IMR-90 (cell line): ENCODE measurements at regions of chr2 and their contacts with region 1.

Region 1: DNA sequence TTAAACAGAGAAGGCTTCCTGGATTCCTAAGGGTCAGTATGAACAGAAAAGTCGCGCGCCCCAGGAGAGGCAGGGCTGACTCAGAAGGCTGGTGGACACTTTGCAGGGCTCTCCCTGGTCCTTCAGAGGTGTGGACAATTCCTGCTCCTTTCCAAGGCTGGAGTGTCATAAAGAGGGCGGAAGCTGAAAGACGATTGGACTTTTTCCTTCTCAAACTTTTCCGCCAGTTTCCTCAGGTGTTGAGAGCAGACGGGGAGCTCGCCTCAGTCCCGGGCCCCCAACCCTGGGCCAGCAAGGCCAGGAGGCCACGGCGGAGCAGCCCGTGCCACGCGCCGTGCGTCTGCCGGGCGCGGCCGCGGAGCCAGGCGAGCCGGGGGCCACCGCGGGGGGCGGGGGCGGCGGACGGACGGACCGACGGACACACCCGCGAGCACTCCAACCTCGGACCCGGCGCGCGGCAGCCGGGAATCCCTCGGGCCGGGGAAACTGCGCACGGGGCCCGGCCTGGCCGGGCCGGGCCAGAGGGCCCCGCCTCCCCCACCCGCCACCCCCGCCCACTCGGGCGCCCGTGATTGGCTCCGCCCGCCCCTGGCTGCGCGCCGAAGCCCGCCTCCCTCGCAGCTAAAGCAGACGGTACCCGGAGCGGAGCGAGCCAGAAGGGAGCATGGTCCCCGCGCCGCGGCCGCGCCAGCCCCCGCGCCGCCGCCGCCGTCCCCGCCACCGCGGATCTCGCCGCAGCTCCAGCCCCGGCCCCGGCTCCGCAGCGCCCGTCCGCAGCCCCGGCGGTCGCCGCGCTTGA is at the start of gene KLHL29:
- DNase-seq: peak; percentile 71
- ATAC-seq: peak; percentile 78
- H3K4me3 ChIP-seq: peak within 1 kb of the TSS; percentile 88
- H3K27ac ChIP-seq: peak within 1 kb of the TSS; percentile 64
- H3K4me1 ChIP-seq: peaks cover 2% of the 10 kb centered on the region
- H3K27me3 ChIP-seq: no peaks in the 10 kb centered on the region
- CTCF ChIP-seq: no peak
- POLR2A ChIP-seq: peak; percentile 85
- RAD21 ChIP-seq: no peak
- total RNA-seq, gene KLHL29: 2.0 and 2.5 TPM in 2 replicates

Region 2: GRCh38 chr2:23157812-23158211 is 226.9 kb before region 1 on chr2:
- CTCF ChIA-PET with region 1: no interaction called
- POLR2A ChIA-PET with region 1: no interaction called
- dilution Hi-C with region 1: no loop called
- in situ Hi-C with region 1: no loop called
- intact Hi-C with region 1: no loop called
- DNase-seq: no peak
- ATAC-seq: no peak
- H3K4me3 ChIP-seq: no peak overlapping the region
- H3K27ac ChIP-seq: no peak overlapping the region
- H3K4me1 ChIP-seq: no peaks in the 10 kb centered on the region
- H3K27me3 ChIP-seq: no peaks in the 10 kb centered on the region
- CTCF ChIP-seq: no peak
- POLR2A ChIP-seq: no peak
- RAD21 ChIP-seq: no peak

Region 3: DNA sequence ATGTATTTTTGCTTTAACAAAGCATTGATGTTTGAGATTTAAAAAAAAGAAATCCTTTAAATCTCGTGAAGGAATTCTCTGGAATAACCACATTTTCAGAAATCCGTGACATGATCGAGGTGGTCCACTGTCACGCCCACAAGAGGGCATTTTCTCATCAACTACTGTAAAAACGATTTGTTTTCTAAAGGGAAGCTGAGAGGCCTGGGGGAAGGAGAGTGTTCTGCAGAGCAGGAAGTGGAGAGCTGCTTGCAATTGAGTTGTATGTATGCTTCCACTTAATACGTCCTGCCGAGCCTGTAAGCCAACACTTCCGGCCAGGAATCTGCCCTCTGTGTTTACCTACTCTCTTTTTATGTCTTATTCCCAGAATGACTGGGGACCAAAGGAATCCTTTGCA is 19.7 kb after region 1 on chr2:
- CTCF ChIA-PET with region 1: no interaction called
- POLR2A ChIA-PET with region 1: no interaction called
- dilution Hi-C with region 1: no loop called
- in situ Hi-C with region 1: no loop called
- intact Hi-C with region 1: loop called (anchors 2 kb)
- DNase-seq: peak; percentile 91
- ATAC-seq: peak; percentile 88
- H3K4me3 ChIP-seq: no peak overlapping the region
- H3K27ac ChIP-seq: peak overlapping the region; percentile 70; the same call in 1 of the 2 replicates
- H3K4me1 ChIP-seq: peaks cover 6% of the 10 kb centered on the region
- H3K27me3 ChIP-seq: no peaks in the 10 kb centered on the region
- CTCF ChIP-seq: peak; percentile 42
- POLR2A ChIP-seq: no peak
- RAD21 ChIP-seq: peak; percentile 40; the same call in 1 of the 2 replicates

Region 4: DNA sequence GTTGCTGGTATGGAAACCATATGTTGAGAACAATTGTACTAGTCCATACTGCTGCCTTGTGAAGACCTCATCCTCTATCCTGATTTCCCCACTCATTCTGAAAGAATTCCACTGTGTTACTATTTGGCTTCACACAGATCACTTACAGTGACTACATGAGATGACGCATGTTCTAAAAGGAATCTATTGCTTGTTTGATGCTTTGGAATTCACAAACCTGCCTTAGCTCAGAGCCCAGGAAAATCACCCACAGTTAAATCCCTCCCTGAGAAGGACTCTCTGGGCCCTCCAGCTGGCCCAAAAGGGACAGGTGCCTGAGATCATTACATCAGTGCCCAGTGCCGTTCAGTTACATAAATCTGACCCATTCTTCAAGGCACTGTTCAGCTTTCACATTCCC is 45.5 kb after region 1 on chr2:
- CTCF ChIA-PET with region 1: no interaction called
- POLR2A ChIA-PET with region 1: no interaction called
- dilution Hi-C with region 1: no loop called
- in situ Hi-C with region 1: no loop called
- intact Hi-C with region 1: loop called (anchors 2 kb)
- DNase-seq: peak; percentile 99
- ATAC-seq: peak; percentile 79
- H3K4me3 ChIP-seq: no peak overlapping the region
- H3K27ac ChIP-seq: peak overlapping the region; percentile 73
- H3K4me1 ChIP-seq: peaks cover 40% of the 10 kb centered on the region
- H3K27me3 ChIP-seq: no peaks in the 10 kb centered on the region
- CTCF ChIP-seq: no peak
- POLR2A ChIP-seq: no peak
- RAD21 ChIP-seq: peak; percentile 22

Region 5: DNA sequence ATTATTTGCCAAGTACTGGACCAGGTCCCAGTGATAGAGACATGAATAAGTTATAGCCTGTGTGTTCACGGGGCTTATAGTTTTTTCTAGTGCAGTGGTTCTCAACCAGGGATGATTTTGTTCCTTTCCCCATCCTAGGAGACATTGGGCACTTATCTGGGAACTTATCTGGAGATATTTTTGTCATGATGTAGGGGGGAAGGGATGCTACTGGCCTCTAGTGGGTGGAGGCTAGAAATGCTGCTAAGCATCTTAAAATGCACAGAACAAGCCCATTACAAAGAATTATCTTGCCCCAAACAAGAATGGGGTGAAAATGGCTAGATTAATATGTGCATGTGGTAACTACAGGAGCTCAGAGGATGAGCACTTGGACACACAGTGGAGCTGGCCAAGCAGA is 75.5 kb after region 1 on chr2:
- CTCF ChIA-PET with region 1: no interaction called
- POLR2A ChIA-PET with region 1: no interaction called
- dilution Hi-C with region 1: no loop called
- in situ Hi-C with region 1: no loop called
- intact Hi-C with region 1: loop called (anchors 5 kb)
- DNase-seq: peak; percentile 47
- ATAC-seq: peak; percentile 63; the same call in 1 of the 2 replicates
- H3K4me3 ChIP-seq: no peak overlapping the region
- H3K27ac ChIP-seq: no peak overlapping the region
- H3K4me1 ChIP-seq: peaks cover 11% of the 10 kb centered on the region
- H3K27me3 ChIP-seq: no peaks in the 10 kb centered on the region
- CTCF ChIP-seq: peak; percentile 64
- POLR2A ChIP-seq: no peak
- RAD21 ChIP-seq: peak; percentile 75

Region 6: GRCh38 chr2:23545396-23545795 is 160.6 kb after region 1 on chr2:
- CTCF ChIA-PET with region 1: no interaction called
- POLR2A ChIA-PET with region 1: no interaction called
- dilution Hi-C with region 1: no loop called
- in situ Hi-C with region 1: no loop called
- intact Hi-C with region 1: loop called (anchors 5 kb)
- DNase-seq: peak; percentile 63
- ATAC-seq: peak; percentile 68
- H3K4me3 ChIP-seq: no peak overlapping the region
- H3K27ac ChIP-seq: peak overlapping the region; percentile 32; the same call in 1 of the 2 replicates
- H3K4me1 ChIP-seq: peaks cover 20% of the 10 kb centered on the region
- H3K27me3 ChIP-seq: no peaks in the 10 kb centered on the region
- CTCF ChIP-seq: peak; percentile 25; the same call in 1 of the 2 replicates
- POLR2A ChIP-seq: no peak
- RAD21 ChIP-seq: no peak

Region 7: GRCh38 chr2:23760736-23761135 is 376.0 kb after region 1 on chr2:
- CTCF ChIA-PET with region 1: no interaction called
- POLR2A ChIA-PET with region 1: no interaction called
- dilution Hi-C with region 1: no loop called
- in situ Hi-C with region 1: loop called (anchors 25 kb)
- intact Hi-C with region 1: loop called (anchors 5 kb)
- DNase-seq: peak; percentile 80
- ATAC-seq: peak; percentile 51
- H3K4me3 ChIP-seq: no peak overlapping the region
- H3K27ac ChIP-seq: no peak overlapping the region
- H3K4me1 ChIP-seq: peaks cover 13% of the 10 kb centered on the region
- H3K27me3 ChIP-seq: no peaks in the 10 kb centered on the region
- CTCF ChIP-seq: peak; percentile 59
- POLR2A ChIP-seq: no peak
- RAD21 ChIP-seq: peak; percentile 56